Left ventricle myocardium inferior (tissue), 1 donor: ENCODE measurements at regions of chr16 and their contacts with region 1.

Region 1: DNA sequence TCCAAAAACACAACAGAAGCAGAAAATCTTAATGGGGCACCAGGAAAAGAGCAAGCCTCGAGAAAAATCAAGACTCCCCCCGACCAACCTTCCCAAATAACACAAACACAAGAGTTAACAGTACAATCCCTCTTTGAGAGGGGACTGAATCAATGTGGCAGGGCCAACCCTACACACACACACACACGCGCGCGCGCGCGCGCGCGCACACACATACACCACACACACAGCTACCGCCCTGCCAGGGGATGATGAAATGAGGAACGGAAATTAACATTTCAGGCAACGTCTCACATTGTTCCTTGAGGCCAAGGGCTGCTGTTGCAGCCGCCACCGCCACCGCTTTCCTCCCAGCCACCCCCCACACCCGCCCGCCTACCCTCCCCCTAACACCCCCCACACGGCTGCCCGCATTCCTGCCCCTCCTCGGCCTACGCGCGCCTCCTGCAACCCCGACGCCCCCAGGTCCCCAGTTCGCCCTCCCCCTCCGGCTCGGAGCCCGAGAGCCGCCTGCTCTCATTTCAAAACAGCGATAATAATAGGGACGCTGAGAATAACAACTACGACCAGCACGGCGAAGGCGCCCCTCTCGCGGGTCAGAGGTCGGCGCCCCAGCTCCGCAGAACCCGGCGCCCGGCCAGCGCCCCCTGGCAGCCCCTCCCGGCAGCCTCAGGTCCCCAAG is 1.2 kb downstream of the ANKRD11 start:
- DNase-seq: peak; percentile 76
- H3K4me3 ChIP-seq: peak overlapping the region; percentile 93
- H3K27ac ChIP-seq: peak overlapping the region; percentile 98
- H3K4me1 ChIP-seq: peaks cover 78% of the 10 kb centered on the region
- H3K27me3 ChIP-seq: no peaks in the 10 kb centered on the region
- CTCF ChIP-seq: peak; percentile 57

Region 2: DNA sequence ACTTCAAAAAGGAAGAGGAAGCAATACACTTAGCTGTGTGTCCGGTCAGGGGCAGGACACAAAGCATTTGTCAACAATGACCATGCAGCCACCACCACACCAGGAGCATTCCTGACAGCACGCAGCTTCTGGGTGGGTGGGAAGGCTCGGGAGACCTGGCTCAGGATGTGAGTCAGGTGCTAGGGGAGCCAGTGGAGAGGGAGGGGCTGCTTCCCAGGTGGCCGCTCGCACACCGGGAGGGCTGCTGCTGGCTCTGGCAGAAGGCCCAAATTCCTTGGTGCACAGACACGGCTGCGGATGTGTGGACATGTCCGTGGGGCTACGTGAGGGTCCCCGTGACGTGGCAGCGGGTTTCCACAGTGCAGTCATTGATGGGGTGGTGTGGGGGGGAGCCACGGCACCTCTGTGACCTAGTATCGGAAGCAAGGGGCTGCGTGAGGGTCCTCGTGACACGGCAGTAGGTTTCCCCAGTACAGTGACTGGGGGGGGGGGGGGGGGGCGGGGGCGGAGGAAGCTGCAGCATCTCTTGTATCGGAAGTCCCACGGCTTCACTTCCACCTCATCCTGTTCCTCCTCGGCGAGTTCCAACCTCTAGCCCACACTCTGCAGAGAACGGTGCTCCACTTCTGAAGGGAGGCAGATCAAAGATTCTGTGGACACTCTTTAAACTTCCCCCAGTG is 158.9 kb before region 1 on chr16:
- intact Hi-C with region 1: loop called (anchors 10 kb)
- DNase-seq: peak; percentile 43
- H3K4me3 ChIP-seq: peak overlapping the region; percentile 41
- H3K27ac ChIP-seq: peak overlapping the region; percentile 85
- H3K4me1 ChIP-seq: peaks cover 91% of the 10 kb centered on the region
- H3K27me3 ChIP-seq: no peaks in the 10 kb centered on the region
- CTCF ChIP-seq: no peak